ENCODE measurements at regions of chr9 and their contacts with region 1.

Region 1: GRCh38 chr9:97659771-97660170 is 26.1 kb downstream of the NCBP1 start:
- DNase-seq: no peak
- ATAC-seq: no peak
- H3K4me3 ChIP-seq: no peak overlapping the region
- H3K4me3 Mint-ChIP-seq: no peak overlapping the region
- H3K27ac ChIP-seq: no peak overlapping the region
- H3K27ac Mint-ChIP-seq: peak overlapping the region; percentile 40
- H3K4me1 ChIP-seq: no peaks in the 10 kb centered on the region
- H3K4me1 Mint-ChIP-seq: peaks cover 16% of the 10 kb centered on the region
- H3K27me3 ChIP-seq: no peaks in the 10 kb centered on the region
- H3K27me3 Mint-ChIP-seq: no peaks in the 10 kb centered on the region
- CTCF ChIP-seq: no peak

Region 2: DNA sequence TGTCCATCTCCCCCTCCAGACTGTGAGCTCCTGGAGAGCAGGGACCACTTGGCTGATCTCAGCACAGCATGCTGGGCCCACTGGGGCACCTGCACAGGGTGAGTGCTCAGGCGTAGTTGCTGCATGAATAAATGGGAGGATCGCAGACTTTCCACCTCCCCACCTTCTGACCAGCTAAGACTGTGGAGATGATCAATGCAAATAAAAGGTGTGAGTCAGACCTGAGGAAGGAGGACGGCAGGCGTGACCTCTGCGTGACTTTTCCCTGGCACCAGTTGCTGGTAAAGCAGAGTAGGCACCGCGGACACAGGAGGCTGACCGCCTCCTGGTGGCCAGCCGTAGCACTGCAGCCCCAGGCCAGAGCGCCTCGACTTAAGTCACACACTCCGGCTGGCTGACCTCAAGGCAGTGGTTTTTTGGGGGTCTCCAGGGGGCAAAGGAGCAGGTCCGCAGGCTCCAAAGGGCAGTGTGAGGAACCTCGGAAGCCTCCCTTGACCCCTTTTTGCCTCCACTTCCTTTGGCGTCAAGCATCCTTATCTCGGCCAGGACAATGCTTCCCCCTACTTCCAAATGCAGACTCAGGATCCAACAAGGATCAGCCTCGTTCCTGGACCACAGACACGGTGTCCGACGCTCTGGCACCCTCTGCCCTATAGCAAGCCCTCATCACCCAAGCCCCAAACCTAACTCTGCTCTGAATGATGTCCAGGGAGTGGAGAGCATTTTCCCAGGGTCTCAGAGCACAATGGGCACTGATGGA is 260.6 kb before region 1 on chr9:
- CTCF ChIA-PET with region 1: no interaction called
- POLR2A ChIA-PET with region 1: no interaction called
- intact Hi-C with region 1: no loop called
- DNase-seq: peak; percentile 37 to 84 (median 60)
- ATAC-seq: peak; percentile 86
- H3K4me3 ChIP-seq: no peak overlapping the region
- H3K4me3 Mint-ChIP-seq: no peak overlapping the region
- H3K27ac ChIP-seq: no peak overlapping the region
- H3K27ac Mint-ChIP-seq: no peak overlapping the region
- H3K4me1 ChIP-seq: peaks cover 7% of the 10 kb centered on the region
- H3K4me1 Mint-ChIP-seq: no peaks in the 10 kb centered on the region
- H3K27me3 ChIP-seq: peaks cover 0 to 5% of the 10 kb centered on the region in 2 experiments
- H3K27me3 Mint-ChIP-seq: no peaks in the 10 kb centered on the region
- CTCF ChIP-seq: peak; percentile 90

Region 3: DNA sequence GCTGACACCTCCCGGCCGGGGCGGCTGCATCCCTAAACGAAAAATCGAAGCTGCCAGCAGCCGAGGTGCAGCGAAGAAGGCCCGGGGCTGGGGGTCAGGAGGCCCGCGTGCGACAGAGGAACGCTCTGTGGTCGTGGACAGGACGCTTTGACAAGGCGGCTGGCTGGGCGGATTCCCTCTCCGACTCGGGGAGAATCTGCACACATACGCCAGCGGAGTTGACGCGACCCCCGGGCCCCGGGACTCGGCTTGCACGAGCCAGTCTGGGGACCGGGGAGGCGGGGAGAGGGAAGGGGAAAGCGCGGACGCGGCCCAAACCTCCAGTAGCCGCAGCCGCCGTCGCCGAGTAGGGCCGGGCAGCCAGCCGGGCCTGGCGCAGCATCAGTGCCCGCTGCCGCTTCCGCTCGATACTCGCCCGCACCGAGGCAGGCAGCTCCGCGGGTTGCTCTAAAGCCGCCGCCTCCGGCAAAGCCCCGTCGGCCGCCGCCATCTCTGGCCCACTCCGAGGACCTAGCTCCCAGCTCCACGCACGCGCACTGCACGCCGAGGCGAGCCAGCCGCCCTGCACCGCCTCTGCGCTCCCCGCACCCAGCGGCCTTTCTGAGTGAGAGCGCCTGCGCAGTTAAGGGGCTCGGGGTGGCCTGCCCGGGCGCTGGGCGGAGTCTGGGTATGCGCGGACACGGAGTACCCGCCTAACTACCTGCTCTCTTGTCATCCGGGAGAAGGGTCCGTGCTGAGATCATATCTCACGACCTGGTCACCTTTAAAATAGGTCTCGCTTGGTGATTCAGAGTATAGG is 37.2 kb after region 1 on chr9 and contains the start of gene XPA:
- CTCF ChIA-PET with region 1: no interaction called
- POLR2A ChIA-PET with region 1: no interaction called
- intact Hi-C with region 1: loop called in 1 of 2 experiments (anchors 5 kb)
- DNase-seq: peak; percentile 94 to 99 (median 97)
- ATAC-seq: peak; percentile 92
- H3K4me3 ChIP-seq: peak within 1 kb of the TSS; percentile 83
- H3K4me3 Mint-ChIP-seq: peak within 1 kb of the TSS; percentile 87
- H3K27ac ChIP-seq: peak within 1 kb of the TSS; percentile 80 to 81
- H3K27ac Mint-ChIP-seq: peak within 1 kb of the TSS; percentile 86
- H3K4me1 ChIP-seq: peaks cover 26% of the 10 kb centered on the region
- H3K4me1 Mint-ChIP-seq: peaks cover 62% of the 10 kb centered on the region
- H3K27me3 ChIP-seq: no peaks in the 10 kb centered on the region
- H3K27me3 Mint-ChIP-seq: peaks cover 4% of the 10 kb centered on the region
- CTCF ChIP-seq: no peak
- total RNA-seq, gene XPA: 20.2 to 23.3 TPM

Region 4: GRCh38 chr9:99150451-99151171 is 1490.8 kb after region 1 on chr9:
- CTCF ChIA-PET with region 1: no interaction called
- POLR2A ChIA-PET with region 1: no interaction called
- intact Hi-C with region 1: no loop called
- DNase-seq: peak in 3 of 14 experiments; percentile 42 to 55 (median 52)
- ATAC-seq: peak; percentile 95
- H3K4me3 ChIP-seq: no peak overlapping the region
- H3K4me3 Mint-ChIP-seq: peak overlapping the region; percentile 72
- H3K27ac ChIP-seq: no peak overlapping the region
- H3K27ac Mint-ChIP-seq: peak overlapping the region; percentile 86
- H3K4me1 ChIP-seq: no peaks in the 10 kb centered on the region
- H3K4me1 Mint-ChIP-seq: peaks cover 50% of the 10 kb centered on the region
- H3K27me3 ChIP-seq: no peaks in the 10 kb centered on the region
- H3K27me3 Mint-ChIP-seq: no peaks in the 10 kb centered on the region
- CTCF ChIP-seq: no peak